Cardiac septum (tissue), 1 donor: ENCODE measurements at regions of chr3 and their contacts with region 1.

Region 1: GRCh38 chr3:11385891-11386290 is 113.7 kb downstream of the ATG7 start:
- DNase-seq: no peak

Region 2: GRCh38 chr3:11530153-11530721 is 144.3 kb after region 1 on chr3:
- intact Hi-C with region 1: loop called (anchors 10 kb)
- DNase-seq: no peak